Mammary epithelial cell (primary cell): ENCODE measurements at regions of chr6 and their contacts with region 1.

Region 1: GRCh38 chr6:2791124-2791974 is 26.2 kb downstream of the WRNIP1 start:
- DNase-seq: peak; percentile 82
- H3K4me3 ChIP-seq: no peak overlapping the region
- H3K27ac ChIP-seq: peak overlapping the region; percentile 66
- H3K4me1 ChIP-seq: peaks cover 39% of the 10 kb centered on the region
- H3K27me3 ChIP-seq: no peaks in the 10 kb centered on the region
- CTCF ChIP-seq: peak; percentile 82 to 91

Region 2: DNA sequence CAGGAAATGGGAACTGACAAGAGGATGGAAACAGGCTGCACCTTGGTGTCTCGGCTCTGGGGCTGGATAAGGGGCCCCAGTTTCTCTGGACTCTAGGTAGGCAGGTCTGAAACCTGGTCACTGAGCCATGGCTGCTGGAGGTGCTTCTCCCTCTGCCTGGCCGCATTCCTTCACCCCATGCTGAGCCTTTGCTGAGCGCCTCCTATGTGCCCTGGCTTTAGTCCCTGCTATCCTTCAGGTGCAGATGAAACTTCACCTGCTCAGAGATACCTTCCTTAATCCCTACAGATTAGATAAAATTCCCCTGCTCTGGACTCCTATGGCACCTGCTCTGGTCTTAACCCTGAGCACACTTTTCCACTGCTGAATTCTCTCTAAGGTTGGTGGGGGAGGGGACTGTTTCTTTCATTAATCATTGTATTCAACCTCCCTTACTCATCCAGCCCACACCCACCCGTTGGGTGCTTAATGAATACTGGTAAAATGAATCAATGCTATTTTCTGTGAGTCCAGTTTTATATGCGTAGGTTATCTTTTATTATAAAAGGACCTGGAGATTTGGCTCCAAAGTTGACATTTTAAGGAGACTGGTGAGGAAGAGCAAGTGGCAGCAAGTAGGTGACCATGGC is 60.0 kb before region 1 on chr6:
- CTCF ChIA-PET with region 1: no interaction called
- dilution Hi-C with region 1: no loop called
- in situ Hi-C with region 1: no loop called
- intact Hi-C with region 1: no loop called
- DNase-seq: peak; percentile 35
- H3K4me3 ChIP-seq: no peak overlapping the region
- H3K27ac ChIP-seq: no peak overlapping the region
- H3K4me1 ChIP-seq: no peaks in the 10 kb centered on the region
- H3K27me3 ChIP-seq: no peaks in the 10 kb centered on the region
- CTCF ChIP-seq: no peak

Region 3: GRCh38 chr6:2749969-2750600 is 41.3 kb before region 1 on chr6:
- CTCF ChIA-PET with region 1: no interaction called
- dilution Hi-C with region 1: no loop called
- in situ Hi-C with region 1: no loop called
- intact Hi-C with region 1: no loop called
- DNase-seq: no peak
- H3K4me3 ChIP-seq: no peak overlapping the region
- H3K27ac ChIP-seq: no peak overlapping the region
- H3K4me1 ChIP-seq: no peaks in the 10 kb centered on the region
- H3K27me3 ChIP-seq: no peaks in the 10 kb centered on the region
- CTCF ChIP-seq: peak; percentile 77 to 86

Region 4: GRCh38 chr6:2810092-2810671 is 18.8 kb after region 1 on chr6:
- CTCF ChIA-PET with region 1: no interaction called
- dilution Hi-C with region 1: no loop called
- in situ Hi-C with region 1: no loop called
- intact Hi-C with region 1: loop called (anchors 1 kb)
- DNase-seq: peak; percentile 100
- H3K4me3 ChIP-seq: no peak overlapping the region
- H3K27ac ChIP-seq: peak overlapping the region; percentile 100
- H3K4me1 ChIP-seq: peaks cover 39% of the 10 kb centered on the region
- H3K27me3 ChIP-seq: no peaks in the 10 kb centered on the region
- CTCF ChIP-seq: peak in 1 of 2 donors; percentile 5

Region 5: GRCh38 chr6:2841264-2842138 is 50.2 kb after region 1 on chr6 and contains the start of gene SERPINB1:
- CTCF ChIA-PET with region 1: interaction called, 19 read pairs
- dilution Hi-C with region 1: loop called (anchors 10 kb)
- in situ Hi-C with region 1: loop called in 1 of 2 experiments (anchors 5 kb)
- intact Hi-C with region 1: loop called (anchors 1 kb)
- DNase-seq: peak; percentile 86
- H3K4me3 ChIP-seq: peak within 1 kb of the TSS; percentile 47 to 59 (median 55)
- H3K27ac ChIP-seq: peak within 1 kb of the TSS; percentile 91
- H3K4me1 ChIP-seq: peaks cover 46% of the 10 kb centered on the region
- H3K27me3 ChIP-seq: no peaks in the 10 kb centered on the region
- CTCF ChIP-seq: no peak
- total RNA-seq, gene SERPINB1: 17.0 to 40.0 TPM

Region 6: GRCh38 chr6:2853761-2854395 is 62.5 kb after region 1 on chr6:
- CTCF ChIA-PET with region 1: interaction called, 3 read pairs
- dilution Hi-C with region 1: loop called (anchors 10 kb)
- in situ Hi-C with region 1: loop called (anchors 5 kb)
- intact Hi-C with region 1: loop called (anchors 1 kb)
- DNase-seq: peak; percentile 82
- H3K4me3 ChIP-seq: peak overlapping the region; percentile 1 to 43 (median 12)
- H3K27ac ChIP-seq: peak overlapping the region; percentile 75
- H3K4me1 ChIP-seq: peaks cover 9% of the 10 kb centered on the region
- H3K27me3 ChIP-seq: no peaks in the 10 kb centered on the region
- CTCF ChIP-seq: peak; percentile 22 to 48

Region 7: DNA sequence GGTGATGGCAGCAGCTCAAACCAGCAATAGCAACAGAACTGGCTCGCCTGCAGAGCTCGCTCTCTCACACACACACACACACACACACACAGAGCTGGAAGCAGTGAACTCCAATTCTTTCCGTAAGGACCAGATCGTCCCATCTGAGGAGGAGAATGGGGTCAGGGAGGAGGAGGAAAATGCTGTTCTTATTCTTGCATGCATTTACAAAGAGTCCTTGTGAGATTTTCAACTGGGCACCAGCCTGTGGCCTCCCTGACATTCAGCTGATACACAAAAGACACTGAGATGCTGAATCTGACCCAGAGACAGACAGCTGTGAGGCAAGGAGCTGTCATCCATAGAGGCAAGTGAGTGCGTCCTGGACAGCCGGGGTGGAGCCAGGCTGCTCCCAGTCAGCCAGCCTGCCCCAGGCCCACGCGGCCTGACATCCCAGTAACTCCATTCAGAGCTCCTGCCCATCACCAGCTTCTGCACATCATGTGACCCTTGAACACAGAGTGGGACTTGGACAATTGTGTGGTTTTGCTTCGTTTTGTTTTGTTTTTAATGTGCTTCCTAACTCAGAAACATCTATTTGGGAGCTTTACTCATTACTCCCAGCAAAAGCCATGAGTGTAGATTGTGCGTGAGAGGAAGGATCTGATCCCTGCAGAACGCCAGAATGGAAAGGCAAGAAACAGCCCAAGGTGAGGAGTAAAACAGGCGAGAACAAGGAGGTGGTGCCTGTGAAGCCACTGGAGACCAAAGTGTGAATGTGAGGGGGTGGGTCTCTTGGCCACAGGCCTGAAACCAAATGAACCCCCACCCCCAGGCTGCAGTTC is 109.7 kb after region 1 on chr6:
- CTCF ChIA-PET with region 1: no interaction called
- dilution Hi-C with region 1: no loop called
- in situ Hi-C with region 1: loop called in 1 of 2 experiments (anchors 25 kb)
- intact Hi-C with region 1: no loop called
- DNase-seq: no peak
- H3K4me3 ChIP-seq: no peak overlapping the region
- H3K27ac ChIP-seq: no peak overlapping the region
- H3K4me1 ChIP-seq: peaks cover 6% of the 10 kb centered on the region
- H3K27me3 ChIP-seq: peaks cover 4% of the 10 kb centered on the region
- CTCF ChIP-seq: no peak

Region 8: GRCh38 chr6:2931970-2932748 is 140.8 kb after region 1 on chr6:
- CTCF ChIA-PET with region 1: interaction called, 11 read pairs
- dilution Hi-C with region 1: no loop called
- in situ Hi-C with region 1: loop called in 1 of 2 experiments (anchors 10 kb)
- intact Hi-C with region 1: loop called (anchors 1 kb)
- DNase-seq: peak; percentile 73
- H3K4me3 ChIP-seq: no peak overlapping the region
- H3K27ac ChIP-seq: no peak overlapping the region
- H3K4me1 ChIP-seq: no peaks in the 10 kb centered on the region
- H3K27me3 ChIP-seq: peaks cover 3% of the 10 kb centered on the region
- CTCF ChIP-seq: peak; percentile 98 to 99

Region 9: GRCh38 chr6:2988426-2989331 is 197.3 kb after region 1 on chr6:
- CTCF ChIA-PET with region 1: no interaction called
- dilution Hi-C with region 1: loop called (anchors 10 kb)
- in situ Hi-C with region 1: no loop called
- intact Hi-C with region 1: loop called (anchors 1 kb)
- DNase-seq: peak; percentile 92
- H3K4me3 ChIP-seq: peak overlapping the region; percentile 63 to 83 (median 69)
- H3K27ac ChIP-seq: peak overlapping the region; percentile 99
- H3K4me1 ChIP-seq: peaks cover 32% of the 10 kb centered on the region
- H3K27me3 ChIP-seq: no peaks in the 10 kb centered on the region
- CTCF ChIP-seq: peak; percentile 50 to 89